ENCODE measurements at regions of chr5 and their contacts with region 1.

Region 1: DNA sequence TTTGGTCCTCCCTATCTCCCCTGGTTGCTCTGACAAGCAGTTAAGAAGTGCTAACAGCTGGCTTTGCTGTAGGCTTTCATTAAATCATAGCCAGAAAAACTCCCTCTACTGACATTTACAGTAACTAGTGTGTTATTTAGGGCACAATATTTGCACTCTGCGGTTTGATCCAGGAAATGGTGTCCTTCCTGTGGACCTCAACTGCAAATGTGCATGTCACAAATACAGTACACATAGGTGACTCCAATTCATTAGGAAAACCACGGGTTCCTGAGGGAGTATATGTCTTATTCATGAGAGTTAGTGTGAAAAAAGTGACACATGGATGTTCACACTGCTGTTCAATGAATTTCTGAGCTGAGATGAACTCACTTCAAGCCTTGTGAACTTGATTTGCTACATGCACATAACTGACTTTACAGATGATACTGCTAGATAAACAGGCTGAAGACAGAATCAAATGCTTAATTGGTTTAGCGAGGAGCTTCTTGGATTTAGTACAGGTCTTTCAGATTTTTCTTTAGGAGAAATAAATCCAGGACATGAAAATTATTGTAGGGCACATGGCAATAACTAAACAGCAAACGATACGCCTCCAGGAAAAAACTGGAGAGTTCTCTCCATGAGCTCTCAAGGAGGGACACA is 281.5 kb downstream of the EFNA5 start:
- DNase-seq: peak; percentile 92
- H3K4me3 ChIP-seq: no peak overlapping the region
- H3K27ac ChIP-seq: peak overlapping the region; percentile 57
- H3K4me1 ChIP-seq: peaks cover 32% of the 10 kb centered on the region
- H3K27me3 ChIP-seq: no peaks in the 10 kb centered on the region
- CTCF ChIP-seq: no peak
- POLR2A ChIP-seq: no peak

Region 2: DNA sequence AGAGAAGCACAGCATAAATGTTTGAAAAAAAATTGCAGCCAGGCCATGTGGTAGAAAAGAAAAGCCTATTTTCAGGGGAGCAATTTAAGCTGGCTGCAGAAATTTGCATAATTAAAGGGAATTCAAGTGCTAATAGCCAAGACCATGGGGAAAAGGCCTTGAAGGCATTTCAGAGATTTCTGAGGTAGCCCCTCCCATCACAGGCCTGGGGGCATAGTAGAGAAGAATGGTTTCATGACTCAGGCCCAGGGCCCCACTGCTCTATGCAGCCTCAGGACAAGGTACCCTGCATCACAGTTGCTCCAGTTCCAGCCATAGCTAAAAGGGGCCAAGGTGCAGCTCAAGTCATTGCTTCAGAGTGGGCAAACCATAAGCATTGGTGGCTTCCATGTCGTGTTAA is 1134.5 kb before region 1 on chr5:
- CTCF ChIA-PET with region 1: no interaction called
- POLR2A ChIA-PET with region 1: no interaction called
- dilution Hi-C with region 1: no loop called
- intact Hi-C with region 1: no loop called
- DNase-seq: no peak
- H3K4me3 ChIP-seq: no peak overlapping the region
- H3K27ac ChIP-seq: no peak overlapping the region
- H3K4me1 ChIP-seq: no peaks in the 10 kb centered on the region
- H3K27me3 ChIP-seq: no peaks in the 10 kb centered on the region
- CTCF ChIP-seq: no peak
- POLR2A ChIP-seq: no peak

Region 3: GRCh38 chr5:106574820-106575219 is 814.4 kb before region 1 on chr5:
- CTCF ChIA-PET with region 1: no interaction called
- POLR2A ChIA-PET with region 1: no interaction called
- dilution Hi-C with region 1: no loop called
- intact Hi-C with region 1: no loop called
- DNase-seq: no peak
- H3K4me3 ChIP-seq: no peak overlapping the region
- H3K27ac ChIP-seq: no peak overlapping the region
- H3K4me1 ChIP-seq: no peaks in the 10 kb centered on the region
- H3K27me3 ChIP-seq: no peaks in the 10 kb centered on the region
- CTCF ChIP-seq: no peak
- POLR2A ChIP-seq: no peak

Region 4: GRCh38 chr5:107217721-107218130 is 171.5 kb before region 1 on chr5:
- CTCF ChIA-PET with region 1: no interaction called
- POLR2A ChIA-PET with region 1: no interaction called
- dilution Hi-C with region 1: no loop called
- intact Hi-C with region 1: no loop called
- DNase-seq: peak; percentile 33
- H3K4me3 ChIP-seq: no peak overlapping the region
- H3K27ac ChIP-seq: peak overlapping the region; percentile 37
- H3K4me1 ChIP-seq: peaks cover 21% of the 10 kb centered on the region
- H3K27me3 ChIP-seq: no peaks in the 10 kb centered on the region
- CTCF ChIP-seq: no peak
- POLR2A ChIP-seq: no peak

Region 5: GRCh38 chr5:107322936-107323335 is 66.3 kb before region 1 on chr5:
- CTCF ChIA-PET with region 1: interaction called, 4 read pairs
- POLR2A ChIA-PET with region 1: no interaction called
- dilution Hi-C with region 1: no loop called
- intact Hi-C with region 1: loop called (anchors 2 kb)
- DNase-seq: peak; percentile 57
- H3K4me3 ChIP-seq: no peak overlapping the region
- H3K27ac ChIP-seq: no peak overlapping the region
- H3K4me1 ChIP-seq: peaks cover 24% of the 10 kb centered on the region
- H3K27me3 ChIP-seq: no peaks in the 10 kb centered on the region
- CTCF ChIP-seq: no peak
- POLR2A ChIP-seq: no peak

Region 6: DNA sequence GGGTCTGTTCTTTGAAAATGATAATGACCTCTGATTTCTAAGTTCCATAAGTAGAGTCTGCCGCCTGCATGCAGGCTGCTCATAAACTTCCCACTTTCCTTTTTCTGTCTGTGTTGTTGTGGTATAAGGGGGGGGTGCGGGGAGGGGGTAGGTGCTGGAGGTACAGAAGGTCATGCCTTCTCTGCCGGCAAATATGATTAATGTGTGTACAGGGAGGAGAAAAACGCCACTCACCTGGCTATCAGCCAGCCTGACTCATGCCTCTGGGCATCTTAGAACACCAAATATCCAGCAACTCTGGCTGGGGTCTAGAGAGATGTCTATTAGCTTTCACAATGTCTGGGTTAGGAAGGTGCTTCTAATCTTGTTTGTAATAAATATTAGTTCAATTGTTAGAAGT is 153.2 kb after region 1 on chr5:
- CTCF ChIA-PET with region 1: no interaction called
- POLR2A ChIA-PET with region 1: no interaction called
- dilution Hi-C with region 1: no loop called
- intact Hi-C with region 1: loop called (anchors 1 kb)
- DNase-seq: peak; percentile 98
- H3K4me3 ChIP-seq: peak overlapping the region in 1 of 3 experiments; percentile 55
- H3K27ac ChIP-seq: peak overlapping the region; percentile 96
- H3K4me1 ChIP-seq: peaks cover 29% of the 10 kb centered on the region
- H3K27me3 ChIP-seq: no peaks in the 10 kb centered on the region
- CTCF ChIP-seq: no peak
- POLR2A ChIP-seq: no peak

Region 7: DNA sequence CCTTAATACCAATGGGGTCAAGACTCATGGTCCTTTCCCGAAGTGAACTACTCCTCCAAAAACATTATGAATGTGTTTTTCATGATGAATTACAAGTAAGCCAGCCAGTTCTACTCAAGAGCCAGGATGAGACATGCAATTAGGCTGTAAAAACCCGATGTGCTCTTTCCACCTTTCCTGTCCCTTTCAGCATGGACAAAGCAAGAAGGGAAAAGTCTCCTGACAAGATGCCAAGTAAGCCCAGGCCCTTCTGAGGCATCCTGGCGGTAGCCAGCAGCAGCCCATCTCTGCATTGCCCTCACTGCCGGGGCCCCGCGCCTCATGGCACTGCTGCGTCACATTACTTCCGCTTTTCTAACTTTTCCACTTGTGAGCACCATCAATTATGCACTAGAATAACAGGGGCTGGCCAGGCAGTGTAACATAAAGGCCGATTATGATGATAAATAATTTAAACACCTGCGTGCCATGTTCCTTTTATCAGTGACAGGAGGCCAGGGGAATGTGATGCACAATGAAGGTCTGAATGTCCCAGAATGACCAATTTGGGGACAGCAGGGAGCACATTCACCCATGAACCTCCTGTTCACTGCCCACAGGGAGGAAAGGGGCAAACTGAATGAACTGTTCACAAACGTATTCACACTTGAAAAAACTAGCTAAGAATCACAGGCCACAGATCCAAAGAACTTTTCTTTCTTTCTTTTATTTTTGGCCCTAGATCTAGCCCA is 244.1 kb after region 1 on chr5:
- CTCF ChIA-PET with region 1: no interaction called
- POLR2A ChIA-PET with region 1: no interaction called
- dilution Hi-C with region 1: no loop called
- intact Hi-C with region 1: no loop called
- DNase-seq: peak; percentile 43
- H3K4me3 ChIP-seq: no peak overlapping the region
- H3K27ac ChIP-seq: no peak overlapping the region
- H3K4me1 ChIP-seq: peaks cover 4% of the 10 kb centered on the region
- H3K27me3 ChIP-seq: no peaks in the 10 kb centered on the region
- CTCF ChIP-seq: no peak
- POLR2A ChIP-seq: no peak

Measured in endothelial cell of umbilical vein (primary cell).